Panc1 (cell line): ENCODE measurements at regions of chr16 and their contacts with region 1.

Region 1: DNA sequence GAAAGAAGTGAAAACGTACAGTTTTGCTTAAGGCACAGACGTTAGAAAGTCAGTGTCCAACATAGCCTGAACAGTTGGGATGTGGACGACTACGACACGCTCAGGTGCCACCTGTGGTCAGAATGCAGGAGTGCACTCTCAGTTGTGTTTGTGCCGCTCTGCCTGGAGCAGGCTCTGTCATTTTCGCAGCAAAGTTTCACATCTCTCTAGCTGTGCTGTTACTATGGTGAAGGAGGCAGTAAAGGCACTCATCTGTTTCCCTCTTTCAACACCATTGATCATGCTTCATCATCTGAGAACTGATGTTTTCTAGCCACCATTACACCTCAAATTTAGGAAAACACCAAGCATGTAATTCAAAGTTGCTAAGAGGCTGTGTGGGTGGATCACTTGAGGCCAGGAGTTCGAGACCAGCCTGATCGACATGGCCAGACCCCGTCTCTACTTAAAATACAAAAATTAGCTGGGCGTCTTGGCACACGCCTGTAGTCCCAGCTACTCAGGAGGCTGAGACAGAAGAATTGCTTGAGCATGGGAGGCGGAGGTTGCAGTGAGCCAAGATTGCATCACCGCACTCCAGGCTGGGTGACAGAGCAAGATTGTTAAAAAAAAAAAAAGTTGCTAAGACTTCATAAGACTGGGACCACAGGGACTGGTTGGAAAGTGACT is 44.9 kb upstream of the DNAJA2 start:
- DNase-seq: peak; percentile 43
- ATAC-seq: peak; percentile 99
- H3K4me3 ChIP-seq: no peak overlapping the region
- H3K27ac ChIP-seq: no peak overlapping the region
- H3K4me1 ChIP-seq: no peaks in the 10 kb centered on the region
- H3K27me3 ChIP-seq: no peaks in the 10 kb centered on the region
- CTCF ChIP-seq: peak; percentile 62

Region 2: DNA sequence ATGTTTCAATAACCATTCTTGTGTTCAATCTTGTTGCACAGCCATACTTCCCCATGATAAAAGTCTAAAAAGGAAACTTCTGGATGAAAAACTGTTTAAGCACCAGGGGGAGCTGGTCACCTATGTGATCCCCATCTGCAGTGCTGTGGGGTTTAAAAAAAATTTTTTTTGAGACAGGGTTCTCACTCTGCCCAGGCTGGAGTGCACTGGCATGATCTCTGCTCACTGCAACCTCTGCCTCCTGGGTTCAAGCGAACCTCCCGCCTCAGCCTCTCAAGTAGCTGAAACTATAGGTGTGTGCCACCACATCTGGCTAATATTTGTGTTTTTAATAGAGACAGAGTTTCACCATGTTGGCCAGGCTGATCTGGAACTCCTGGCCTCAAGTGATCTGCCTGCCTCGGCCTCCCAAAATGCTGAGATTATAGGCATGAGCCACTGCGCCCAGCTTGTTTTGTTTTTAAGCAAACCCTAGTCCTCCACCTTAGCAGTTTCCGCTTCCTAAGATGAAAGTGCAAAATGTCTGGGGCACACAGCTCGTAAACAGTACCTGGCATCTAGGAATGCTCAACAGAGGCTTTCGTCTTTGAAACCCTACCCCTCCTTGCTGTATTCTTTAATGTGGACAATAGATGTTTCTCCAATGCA is 70.3 kb before region 1 on chr16:
- CTCF ChIA-PET with region 1: no interaction called
- POLR2A ChIA-PET with region 1: no interaction called
- in situ Hi-C with region 1: no loop called
- intact Hi-C with region 1: loop called (anchors 2 kb)
- DNase-seq: no peak
- ATAC-seq: peak; percentile 82
- H3K4me3 ChIP-seq: no peak overlapping the region
- H3K27ac ChIP-seq: no peak overlapping the region
- H3K4me1 ChIP-seq: no peaks in the 10 kb centered on the region
- H3K27me3 ChIP-seq: no peaks in the 10 kb centered on the region
- CTCF ChIP-seq: peak; percentile 71

Region 3: DNA sequence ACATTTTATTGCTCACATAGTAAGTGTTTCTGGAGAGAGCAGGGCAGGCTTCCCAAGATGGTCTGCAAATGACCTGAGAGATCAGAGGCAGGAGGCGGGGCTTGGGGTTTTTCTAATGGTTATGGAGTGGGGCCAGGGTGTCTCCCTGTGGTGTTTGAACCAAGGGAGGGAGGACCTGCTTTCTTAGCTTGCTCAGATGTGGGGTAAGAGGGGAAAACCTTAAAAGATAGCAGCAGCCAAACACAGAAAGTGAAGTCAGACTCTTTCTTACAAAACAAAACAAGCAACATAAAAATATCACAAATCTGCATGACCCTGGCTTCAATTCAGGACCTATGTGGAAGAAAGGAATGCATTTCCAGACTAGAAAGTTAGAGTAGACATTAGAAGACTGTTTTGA is 22.0 kb before region 1 on chr16:
- CTCF ChIA-PET with region 1: no interaction called
- POLR2A ChIA-PET with region 1: no interaction called
- in situ Hi-C with region 1: no loop called
- intact Hi-C with region 1: no loop called
- DNase-seq: no peak
- ATAC-seq: no peak
- H3K4me3 ChIP-seq: no peak overlapping the region
- H3K27ac ChIP-seq: no peak overlapping the region
- H3K4me1 ChIP-seq: no peaks in the 10 kb centered on the region
- H3K27me3 ChIP-seq: no peaks in the 10 kb centered on the region
- CTCF ChIP-seq: no peak

Region 4: DNA sequence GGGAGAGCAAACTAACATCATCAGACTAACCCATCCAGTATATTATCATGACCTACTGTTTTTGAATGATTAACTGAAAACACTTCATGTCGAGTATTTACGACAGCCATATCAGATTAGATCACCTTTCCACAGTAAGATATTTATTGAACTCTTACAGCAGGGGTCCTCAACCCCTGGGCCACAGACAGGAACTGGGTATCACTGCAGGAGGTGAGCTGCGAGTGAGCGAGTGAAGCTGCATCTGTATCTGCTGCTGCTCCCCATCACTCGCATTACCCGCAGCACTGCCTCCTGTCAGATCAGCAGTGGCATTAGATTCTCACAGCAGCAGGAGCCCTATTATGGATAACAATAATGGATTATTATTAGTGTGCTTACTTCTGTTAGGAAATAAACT is 65.8 kb after region 1 on chr16:
- CTCF ChIA-PET with region 1: no interaction called
- POLR2A ChIA-PET with region 1: no interaction called
- in situ Hi-C with region 1: no loop called
- intact Hi-C with region 1: no loop called
- DNase-seq: no peak
- ATAC-seq: no peak
- H3K4me3 ChIP-seq: no peak overlapping the region
- H3K27ac ChIP-seq: no peak overlapping the region
- H3K4me1 ChIP-seq: no peaks in the 10 kb centered on the region
- H3K27me3 ChIP-seq: no peaks in the 10 kb centered on the region
- CTCF ChIP-seq: no peak

Region 5: DNA sequence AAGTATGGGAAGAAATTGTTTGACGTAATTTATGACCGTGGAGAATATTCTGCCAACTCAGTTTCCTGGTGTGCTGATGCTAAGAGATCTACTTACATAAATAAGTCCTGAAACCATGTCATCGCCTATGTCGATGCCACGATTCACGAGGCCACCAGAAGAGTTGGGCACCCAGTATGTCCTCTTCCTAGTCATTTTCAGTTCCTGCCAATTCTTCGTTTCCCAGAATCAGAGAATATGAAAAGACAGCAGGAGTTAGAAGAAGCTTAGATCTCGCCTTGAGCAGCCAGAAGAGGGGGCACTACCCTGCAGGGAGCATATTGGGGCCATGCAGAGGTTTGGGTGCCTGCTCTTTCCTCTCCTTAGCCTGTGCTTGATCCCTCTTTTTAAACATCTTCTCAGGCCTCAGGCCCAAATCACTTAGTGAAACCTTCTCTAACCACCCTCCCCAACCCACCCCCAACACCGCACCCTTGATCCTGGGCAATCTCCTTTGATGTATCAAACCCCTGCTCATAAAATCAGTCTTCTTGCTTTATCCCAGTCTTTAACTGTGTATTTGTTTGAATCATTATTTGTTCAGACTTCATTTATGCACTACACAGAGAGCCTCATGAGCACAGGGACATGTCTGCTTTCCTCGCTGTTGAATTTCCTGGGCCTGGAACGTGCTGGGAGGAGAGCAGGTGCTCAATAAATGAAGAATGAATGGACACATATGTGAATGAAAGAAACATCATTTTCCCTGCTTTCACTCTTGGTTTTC is 1213.6 kb after region 1 on chr16:
- CTCF ChIA-PET with region 1: interaction called, 14 read pairs
- POLR2A ChIA-PET with region 1: no interaction called
- in situ Hi-C with region 1: no loop called
- intact Hi-C with region 1: no loop called
- DNase-seq: peak; percentile 24
- ATAC-seq: peak; percentile 74
- H3K4me3 ChIP-seq: no peak overlapping the region
- H3K27ac ChIP-seq: no peak overlapping the region
- H3K4me1 ChIP-seq: no peaks in the 10 kb centered on the region
- H3K27me3 ChIP-seq: no peaks in the 10 kb centered on the region
- CTCF ChIP-seq: peak; percentile 59